ENCODE measurements at regions of chr7 and their contacts with region 1.

Region 1: DNA sequence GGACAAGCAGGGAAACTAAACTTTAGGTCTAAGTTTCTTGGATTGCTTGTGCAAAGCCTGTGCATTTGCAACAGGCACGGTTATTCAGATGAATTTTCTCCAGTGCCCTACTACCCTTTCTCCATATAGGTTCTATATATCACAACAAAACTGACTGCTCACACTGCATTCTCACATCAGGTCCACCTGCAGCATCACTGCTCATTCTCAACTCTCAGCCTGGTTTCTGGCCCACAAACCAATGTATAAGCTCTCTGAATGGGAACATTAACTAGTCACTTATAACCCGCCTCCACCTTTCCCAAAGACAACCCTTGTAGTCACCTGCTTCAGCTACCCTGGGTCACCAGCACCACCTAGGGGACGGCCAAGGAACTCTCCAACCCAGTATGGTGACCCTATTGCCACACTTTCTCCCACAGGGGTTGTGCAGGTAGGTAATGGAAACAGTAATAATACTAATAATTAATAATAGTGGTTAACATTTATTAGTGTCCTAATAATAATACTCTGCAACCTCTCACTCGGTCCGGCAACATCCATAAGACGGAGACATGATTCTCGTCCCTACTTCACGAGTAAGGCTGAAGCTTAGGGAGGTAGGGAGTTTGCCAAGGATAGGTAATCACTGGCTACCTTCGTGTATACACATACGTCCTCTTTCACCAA is 97.3 kb downstream of the CLEC2L start:
- DNase-seq: no peak
- H3K4me3 ChIP-seq: no peak overlapping the region
- H3K27me3 ChIP-seq: no peaks in the 10 kb centered on the region
- CTCF ChIP-seq: peak; percentile 70

Region 2: DNA sequence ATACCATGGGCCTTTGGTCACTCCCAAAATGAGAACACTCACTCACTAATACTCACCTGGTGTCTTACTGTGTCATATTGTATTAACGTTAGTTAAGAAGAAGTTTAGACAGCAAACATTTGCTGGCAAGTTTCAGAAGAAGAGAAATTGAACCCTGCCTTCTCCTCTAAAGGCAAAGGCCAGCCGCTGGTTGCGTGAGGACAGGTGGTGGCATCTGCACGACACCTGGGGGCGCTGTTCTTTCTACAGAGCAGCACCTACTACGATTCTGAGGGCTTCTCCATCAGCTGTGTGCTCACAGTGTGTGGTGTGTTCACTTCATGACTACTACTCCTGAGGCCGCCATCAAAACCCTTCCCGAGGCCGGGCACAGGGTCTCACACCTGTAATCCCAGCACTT is 115.2 kb before region 1 on chr7:
- CTCF ChIA-PET with region 1: interaction called, 29 read pairs
- POLR2A ChIA-PET with region 1: no interaction called
- DNase-seq: no peak
- H3K4me3 ChIP-seq: no peak overlapping the region
- H3K27me3 ChIP-seq: no peaks in the 10 kb centered on the region
- CTCF ChIP-seq: no peak

Region 3: DNA sequence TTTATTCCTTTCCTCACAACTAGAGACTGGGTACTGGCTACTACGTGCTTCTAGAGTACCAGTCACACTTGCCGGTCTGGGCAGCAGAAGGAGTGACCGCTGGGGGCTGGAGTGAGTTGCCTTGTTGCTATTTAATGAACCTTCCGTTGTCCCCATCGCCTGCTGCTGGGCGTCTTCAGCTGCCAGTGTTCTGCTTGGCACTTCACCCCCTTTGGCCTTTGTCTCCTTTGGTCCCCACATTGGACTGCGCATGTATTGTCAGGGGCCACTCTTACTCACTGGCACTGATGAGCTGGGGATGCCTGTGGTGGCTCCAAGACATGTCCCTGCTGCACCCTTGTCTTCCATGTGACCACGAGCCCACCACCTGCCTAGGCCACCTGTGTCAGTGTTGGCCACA is 13.3 kb after region 1 on chr7:
- CTCF ChIA-PET with region 1: interaction called, 28 read pairs
- POLR2A ChIA-PET with region 1: no interaction called
- DNase-seq: no peak
- H3K4me3 ChIP-seq: no peak overlapping the region
- H3K27me3 ChIP-seq: no peaks in the 10 kb centered on the region
- CTCF ChIP-seq: no peak

Region 4: DNA sequence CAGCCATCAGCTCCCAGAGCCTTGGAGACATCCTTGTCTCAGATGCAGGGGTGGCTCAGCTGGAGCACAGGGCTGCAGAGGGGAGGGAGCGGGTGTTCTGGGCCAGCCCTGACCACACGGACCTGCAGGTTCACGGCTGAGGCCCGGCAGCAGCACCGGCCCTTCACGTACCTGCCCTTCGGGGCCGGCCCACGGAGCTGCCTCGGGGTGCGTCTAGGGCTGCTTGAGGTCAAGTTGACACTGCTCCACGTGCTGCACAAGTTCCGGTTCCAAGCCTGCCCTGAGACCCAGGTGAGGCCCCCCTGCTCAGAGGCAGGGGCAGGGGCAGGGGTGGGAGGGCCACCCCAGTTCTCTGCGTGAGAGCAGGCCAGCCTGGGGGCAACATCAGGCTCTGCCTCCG is 396.7 kb after region 1 on chr7:
- CTCF ChIA-PET with region 1: interaction called, 14 read pairs
- POLR2A ChIA-PET with region 1: no interaction called
- DNase-seq: no peak
- H3K4me3 ChIP-seq: no peak overlapping the region
- H3K27me3 ChIP-seq: peaks cover 4% of the 10 kb centered on the region; the same call in 1 of the 2 replicates
- CTCF ChIP-seq: no peak